HEK293 (cell line): ENCODE measurements at regions of chr15 and their contacts with region 1.

Region 1: DNA sequence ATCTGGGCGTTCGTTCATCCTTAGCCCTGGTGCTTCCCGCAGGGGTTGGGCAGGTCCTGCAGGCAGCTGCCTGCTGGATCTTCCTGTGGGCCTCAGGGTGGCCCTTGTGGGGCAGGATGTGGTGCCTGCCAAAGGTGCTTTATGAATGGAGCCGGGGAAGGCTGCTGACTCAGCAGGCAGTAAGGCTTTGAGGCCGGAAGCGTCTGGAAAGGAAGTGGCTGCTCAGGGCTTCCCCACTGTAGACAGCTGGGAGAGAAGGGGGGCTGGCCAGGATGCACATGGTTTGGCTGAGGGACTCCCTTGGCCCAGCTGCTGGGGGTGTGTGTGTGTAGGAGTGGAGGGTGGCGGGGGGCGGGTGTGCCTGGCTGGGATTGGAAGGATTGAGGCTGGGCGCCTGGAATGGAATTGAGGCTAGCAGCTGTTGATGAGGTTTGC is 12.9 kb downstream of the CD276 start:
- H3K4me3 ChIP-seq: no peak overlapping the region
- H3K27ac ChIP-seq: peak overlapping the region; percentile 54
- H3K4me1 ChIP-seq: peaks cover 12% of the 10 kb centered on the region
- CTCF ChIP-seq: no peak

Region 2: DNA sequence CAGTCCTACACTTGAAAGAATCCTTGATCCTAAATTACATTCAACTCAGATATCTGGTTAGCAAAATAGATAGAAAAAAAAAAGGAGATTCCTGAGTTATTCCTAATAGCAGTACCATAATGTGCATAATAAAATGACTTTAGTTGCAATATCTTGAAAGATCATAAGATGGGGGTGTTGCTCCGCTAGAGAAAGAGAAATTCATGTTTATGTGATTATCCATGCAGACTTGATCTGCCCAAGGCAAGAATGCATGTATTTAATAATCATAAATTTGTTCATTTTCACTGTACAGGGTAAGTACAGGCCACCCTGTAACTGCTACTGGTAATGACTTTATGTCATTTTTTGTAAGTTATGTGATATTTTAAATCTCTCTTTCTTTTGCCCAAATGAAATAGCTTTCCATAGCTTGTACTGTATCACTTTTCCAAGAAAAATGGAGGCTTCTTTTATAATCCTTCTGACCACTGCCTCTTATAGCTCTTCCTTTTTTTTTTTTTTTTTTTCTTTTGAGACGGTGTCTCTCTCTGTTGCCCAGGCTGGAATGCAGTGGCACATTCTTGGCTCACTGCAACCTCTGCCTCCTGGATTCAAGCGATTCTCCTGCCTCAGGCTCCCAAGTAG is 412.8 kb before region 1 on chr15:
- CTCF ChIA-PET with region 1: interaction called, 14 read pairs
- POLR2A ChIA-PET with region 1: no interaction called
- H3K4me3 ChIP-seq: no peak overlapping the region
- H3K27ac ChIP-seq: no peak overlapping the region
- H3K4me1 ChIP-seq: no peaks in the 10 kb centered on the region
- CTCF ChIP-seq: no peak

Region 3: GRCh38 chr15:73560501-73561117 is 136.4 kb before region 1 on chr15:
- CTCF ChIA-PET with region 1: interaction called, 80 read pairs
- POLR2A ChIA-PET with region 1: interaction called, 3 read pairs
- H3K4me3 ChIP-seq: no peak overlapping the region
- H3K27ac ChIP-seq: no peak overlapping the region
- H3K4me1 ChIP-seq: peaks cover 7% of the 10 kb centered on the region; the same call in 1 of the 2 replicates
- CTCF ChIP-seq: no peak

Region 4: GRCh38 chr15:73677146-73677607 is 19.9 kb before region 1 on chr15:
- CTCF ChIA-PET with region 1: interaction called, 261 read pairs
- POLR2A ChIA-PET with region 1: interaction called, 4 read pairs
- H3K4me3 ChIP-seq: no peak overlapping the region
- H3K27ac ChIP-seq: no peak overlapping the region
- H3K4me1 ChIP-seq: no peaks in the 10 kb centered on the region
- CTCF ChIP-seq: no peak

Region 5: GRCh38 chr15:73717802-73718201 is 20.8 kb after region 1 on chr15:
- CTCF ChIA-PET with region 1: interaction called, 12 read pairs
- POLR2A ChIA-PET with region 1: no interaction called
- H3K4me3 ChIP-seq: no peak overlapping the region
- H3K27ac ChIP-seq: no peak overlapping the region
- H3K4me1 ChIP-seq: no peaks in the 10 kb centered on the region
- CTCF ChIP-seq: peak; percentile 15; the same call in 1 of the 2 replicates